IMR-90 (cell line): ENCODE measurements at regions of chr5 and their contacts with region 1.

Region 1: GRCh38 chr5:88298425-88298824 is 29.8 kb upstream of the TMEM161B start:
- DNase-seq: peak; percentile 82
- ATAC-seq: peak; percentile 77
- H3K4me3 ChIP-seq: no peak overlapping the region
- H3K27ac ChIP-seq: no peak overlapping the region
- H3K4me1 ChIP-seq: peaks cover 2% of the 10 kb centered on the region; the same call in 1 of the 2 replicates
- H3K27me3 ChIP-seq: no peaks in the 10 kb centered on the region
- CTCF ChIP-seq: no peak
- POLR2A ChIP-seq: no peak
- RAD21 ChIP-seq: no peak

Region 2: GRCh38 chr5:87936667-87937066 is 361.8 kb before region 1 on chr5:
- CTCF ChIA-PET with region 1: no interaction called
- POLR2A ChIA-PET with region 1: no interaction called
- dilution Hi-C with region 1: no loop called
- in situ Hi-C with region 1: no loop called
- intact Hi-C with region 1: no loop called
- DNase-seq: no peak
- ATAC-seq: no peak
- H3K4me3 ChIP-seq: no peak overlapping the region
- H3K27ac ChIP-seq: no peak overlapping the region
- H3K4me1 ChIP-seq: no peaks in the 10 kb centered on the region
- H3K27me3 ChIP-seq: no peaks in the 10 kb centered on the region
- CTCF ChIP-seq: no peak
- POLR2A ChIP-seq: no peak
- RAD21 ChIP-seq: no peak

Region 3: DNA sequence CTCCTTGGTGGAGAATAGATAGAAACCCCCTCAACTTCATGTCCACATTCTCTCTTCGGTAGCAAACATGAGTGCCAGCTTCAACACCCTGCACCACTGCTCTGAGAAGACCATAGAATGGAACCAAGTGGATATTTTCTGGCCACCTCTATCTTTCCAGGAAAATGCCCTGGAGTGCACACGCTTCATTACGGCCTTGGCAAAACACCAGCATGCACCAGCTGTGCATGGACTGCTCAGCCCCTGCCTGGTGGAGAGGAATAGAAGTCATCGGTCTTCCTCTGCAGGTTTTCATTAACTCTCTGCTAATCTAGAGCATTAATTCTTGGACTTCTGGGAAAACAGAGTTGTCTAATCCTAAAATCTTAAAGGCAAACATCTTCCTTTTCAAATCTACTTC is 181.8 kb after region 1 on chr5:
- CTCF ChIA-PET with region 1: interaction called, 11 read pairs
- POLR2A ChIA-PET with region 1: no interaction called
- dilution Hi-C with region 1: no loop called
- in situ Hi-C with region 1: no loop called
- intact Hi-C with region 1: no loop called
- DNase-seq: no peak
- ATAC-seq: no peak
- H3K4me3 ChIP-seq: no peak overlapping the region
- H3K27ac ChIP-seq: no peak overlapping the region
- H3K4me1 ChIP-seq: no peaks in the 10 kb centered on the region
- H3K27me3 ChIP-seq: no peaks in the 10 kb centered on the region
- CTCF ChIP-seq: no peak
- POLR2A ChIP-seq: no peak
- RAD21 ChIP-seq: no peak